Spleen (tissue), 13 donors: ENCODE measurements at regions of chr7 and their contacts with region 1.

Region 1: DNA sequence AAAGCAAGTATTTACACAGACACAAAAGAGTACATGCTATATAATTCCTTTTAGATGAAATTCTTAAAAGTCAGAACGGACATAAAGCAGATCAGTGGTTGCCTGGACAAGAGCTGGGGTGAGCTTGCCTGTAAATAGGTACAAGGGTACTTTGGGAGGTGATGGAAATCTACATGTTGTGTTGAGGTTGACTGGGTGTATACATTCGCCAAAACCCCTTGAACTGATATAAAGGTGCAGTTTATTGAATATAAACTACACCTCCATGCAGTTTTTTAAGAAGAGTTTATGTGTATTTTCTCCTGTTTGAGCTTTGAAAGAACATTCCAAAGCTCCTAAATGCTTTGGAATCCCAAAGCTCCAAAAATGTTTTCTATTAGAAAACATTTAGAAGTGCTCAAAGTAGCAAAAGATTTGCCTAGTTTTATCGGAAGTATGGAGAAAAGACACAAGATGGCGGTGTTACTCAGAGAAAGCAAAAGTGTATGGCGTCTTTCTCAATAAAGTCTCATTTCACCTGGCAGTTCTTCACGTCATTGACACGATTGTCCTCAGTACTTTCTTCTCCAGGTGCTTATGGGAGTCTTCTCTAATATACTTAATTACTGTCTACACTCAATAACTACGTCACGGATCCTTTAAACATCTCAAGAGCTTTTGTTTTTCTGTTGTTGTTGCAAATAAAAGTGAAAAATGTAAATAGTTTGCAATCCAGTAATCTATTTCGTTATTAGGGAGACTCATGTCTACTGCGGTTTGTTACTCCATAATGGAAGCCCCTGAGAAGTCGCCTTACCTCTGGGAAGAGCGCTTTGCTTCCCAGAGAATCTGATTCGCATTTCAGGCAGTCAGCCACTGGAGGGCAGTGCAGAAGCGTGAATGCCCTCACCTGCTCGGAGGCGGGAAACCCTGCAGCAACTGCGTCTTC is 14.7 kb upstream of the SEC61G start:
- DNase-seq: peak; percentile 86
- H3K4me3 ChIP-seq: peak overlapping the region in 6 of 8 donors; percentile 7 to 61 (median 28)
- H3K27ac ChIP-seq: peak overlapping the region in 3 of 8 donors; percentile 4 to 12 (median 6)
- H3K4me1 ChIP-seq: peaks cover 0 to 11% (median 3%) of the 10 kb centered on the region in 6 donors
- H3K27me3 ChIP-seq: peaks cover 0 to 36% (median 0%) of the 10 kb centered on the region in 7 donors
- CTCF ChIP-seq: peak in 10 of 11 experiments; percentile 51 to 91 (median 80)
- POLR2A ChIP-seq: no peak

Region 2: DNA sequence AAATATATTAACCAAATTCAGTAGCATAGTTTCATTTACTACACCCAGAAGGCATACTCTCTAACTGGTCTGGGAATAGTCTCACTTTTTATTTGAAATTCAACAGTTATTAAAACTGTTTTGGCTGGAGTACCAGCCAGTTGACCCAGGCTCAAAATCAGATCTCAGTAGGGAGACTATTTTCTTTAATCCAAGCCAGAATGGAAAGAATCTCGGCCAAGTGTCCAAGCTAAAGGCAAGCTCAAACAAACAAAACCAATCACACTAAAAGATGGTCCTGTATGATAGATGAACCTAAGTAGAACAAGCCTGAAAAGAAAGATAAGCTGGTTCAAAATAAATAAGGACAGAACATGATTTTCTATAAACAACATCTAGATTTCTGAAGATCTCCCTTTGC is 1997.9 kb before region 1 on chr7:
- intact Hi-C with region 1: no loop called
- DNase-seq: no peak
- H3K4me3 ChIP-seq: no peak overlapping the region
- H3K27ac ChIP-seq: no peak overlapping the region
- H3K4me1 ChIP-seq: no peaks in the 10 kb centered on the region
- H3K27me3 ChIP-seq: no peaks in the 10 kb centered on the region
- CTCF ChIP-seq: no peak
- POLR2A ChIP-seq: no peak

Region 3: DNA sequence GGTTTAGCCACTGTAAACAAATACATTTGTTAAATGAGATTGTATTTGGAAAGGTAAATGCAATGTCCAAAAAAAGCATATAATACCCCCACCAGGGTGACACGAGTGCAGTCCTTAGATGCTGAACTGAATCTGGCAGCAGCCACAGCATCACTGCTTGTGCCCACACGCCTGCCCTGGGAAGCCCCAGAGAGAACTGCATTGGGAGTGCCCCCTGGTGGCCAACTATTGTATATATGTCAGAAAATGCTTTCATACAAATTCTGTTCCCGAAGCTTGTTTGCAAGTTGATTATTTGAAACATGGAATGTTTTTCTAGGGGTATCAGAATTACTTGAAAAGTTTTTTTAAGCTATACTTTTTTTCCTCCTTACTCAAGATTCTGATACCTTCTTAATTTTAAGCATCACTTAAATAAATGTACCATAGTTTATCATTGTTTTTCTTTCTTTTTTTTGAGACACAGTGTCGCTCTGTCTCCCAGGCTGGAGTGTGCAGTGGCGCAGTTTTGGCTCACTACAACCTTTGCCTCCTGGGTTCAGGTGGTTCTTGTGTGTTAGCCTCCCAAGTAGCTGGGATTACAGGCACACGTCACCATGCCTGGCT is 641.5 kb after region 1 on chr7:
- intact Hi-C with region 1: loop called (anchors 5 kb)
- DNase-seq: peak; percentile 91
- H3K4me3 ChIP-seq: no peak overlapping the region
- H3K27ac ChIP-seq: no peak overlapping the region
- H3K4me1 ChIP-seq: peaks cover 0 to 5% (median 0%) of the 10 kb centered on the region in 6 donors
- H3K27me3 ChIP-seq: no peaks in the 10 kb centered on the region
- CTCF ChIP-seq: peak; percentile 53 to 78 (median 70)
- POLR2A ChIP-seq: no peak